CD8-positive, alpha-beta T cell (primary cell): ENCODE measurements at regions of chr20 and their contacts with region 1.

Region 1: DNA sequence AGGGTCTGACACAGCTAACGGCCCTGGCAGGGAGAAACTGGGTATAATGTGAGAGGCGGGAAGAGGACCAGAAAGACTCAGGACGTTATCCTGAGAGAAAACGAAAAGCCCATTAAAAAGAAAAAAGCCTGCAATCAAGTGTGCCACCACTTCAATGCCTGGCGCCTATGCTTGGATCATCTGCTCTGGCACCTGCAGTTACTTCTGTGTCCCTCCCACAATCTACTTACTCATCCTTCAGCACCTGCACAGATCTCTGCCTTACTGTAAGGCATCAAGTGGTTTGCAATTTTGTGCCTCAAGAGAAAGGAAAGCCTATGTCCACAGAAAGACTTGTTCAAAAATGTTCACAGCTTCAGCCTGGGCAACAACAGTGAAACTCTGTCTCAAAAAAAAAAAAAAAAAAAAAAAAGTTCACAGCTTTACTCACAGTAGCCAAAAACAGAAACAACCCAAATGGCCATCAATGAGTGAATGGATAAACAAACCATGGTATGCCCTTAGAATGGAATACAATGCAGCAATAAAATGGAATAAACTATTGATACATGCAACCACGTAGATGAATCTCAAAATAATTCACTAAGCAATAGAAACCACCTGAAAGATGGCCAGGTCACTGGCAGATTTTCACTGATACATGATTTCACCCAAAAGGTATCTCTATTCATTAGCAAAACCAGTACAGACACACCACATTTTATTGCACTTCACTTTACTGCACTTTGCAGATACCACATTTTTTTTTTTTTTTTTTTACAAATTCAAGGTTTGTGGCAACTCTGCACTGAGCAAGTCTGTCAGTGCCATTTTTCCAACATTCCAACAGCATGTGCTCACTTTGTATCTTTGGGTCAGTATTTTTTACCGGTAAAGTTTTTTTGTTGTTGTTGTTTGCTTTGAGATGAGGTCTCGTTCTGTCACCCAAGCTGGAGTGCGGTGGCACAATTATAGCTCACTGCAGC is 48.6 kb downstream of the ABHD12 start:
- DNase-seq: no peak
- ATAC-seq: no peak
- H3K4me3 ChIP-seq: no peak overlapping the region
- H3K4me3 Mint-ChIP-seq: no peak overlapping the region
- H3K27ac ChIP-seq: no peak overlapping the region
- H3K27ac Mint-ChIP-seq: no peak overlapping the region
- H3K4me1 ChIP-seq: peaks cover 5% of the 10 kb centered on the region
- H3K4me1 Mint-ChIP-seq: peaks cover 36% of the 10 kb centered on the region
- H3K27me3 ChIP-seq: no peaks in the 10 kb centered on the region
- H3K27me3 Mint-ChIP-seq: no peaks in the 10 kb centered on the region
- CTCF ChIP-seq: no peak

Region 2: DNA sequence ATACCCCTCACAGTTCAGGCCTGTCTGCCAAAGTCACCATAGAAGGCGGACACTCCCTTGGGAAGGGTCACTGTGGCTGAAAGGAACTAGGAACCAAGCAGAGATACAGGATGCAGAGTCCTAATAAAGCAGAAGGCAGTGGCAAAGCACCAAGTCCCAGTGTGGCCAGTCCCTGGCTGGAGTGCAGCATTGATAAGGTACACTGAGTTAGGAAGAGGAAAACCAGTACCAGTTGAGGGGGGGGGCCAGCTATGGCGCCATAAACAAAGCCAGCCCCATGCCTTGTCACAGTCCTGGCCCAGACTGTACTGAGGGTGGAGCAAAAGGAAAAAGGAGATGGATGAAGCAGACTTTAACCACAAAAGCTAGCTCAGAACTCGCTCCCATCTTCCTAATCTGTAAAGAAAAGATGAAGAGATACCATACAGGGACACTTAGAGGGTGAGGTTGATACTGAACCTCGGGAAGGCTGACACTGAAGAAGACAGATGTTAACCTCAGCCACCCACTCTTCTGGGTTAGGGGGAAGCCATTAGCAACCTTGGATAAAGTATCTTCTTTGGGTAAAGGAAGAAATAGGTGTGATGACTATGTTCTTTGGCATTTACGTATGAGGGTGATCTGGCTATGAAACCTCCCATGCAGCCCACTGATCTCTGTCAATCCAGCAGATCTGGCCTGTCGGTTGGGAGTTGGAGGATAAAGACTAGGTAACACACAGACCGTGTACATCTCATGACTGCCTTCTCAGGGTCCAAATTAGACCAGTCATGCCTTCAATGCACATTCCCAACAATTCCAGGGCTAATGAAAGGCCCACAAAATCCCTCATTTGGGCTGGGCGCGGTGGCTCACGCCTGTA is 40.9 kb after region 1 on chr20:
- CTCF ChIA-PET with region 1: no interaction called
- POLR2A ChIA-PET with region 1: no interaction called
- intact Hi-C with region 1: loop called in 1 of 2 experiments (anchors 5 kb)
- DNase-seq: no peak
- ATAC-seq: no peak
- H3K4me3 ChIP-seq: no peak overlapping the region
- H3K4me3 Mint-ChIP-seq: no peak overlapping the region
- H3K27ac ChIP-seq: no peak overlapping the region
- H3K27ac Mint-ChIP-seq: no peak overlapping the region
- H3K4me1 ChIP-seq: no peaks in the 10 kb centered on the region
- H3K4me1 Mint-ChIP-seq: peaks cover 12% of the 10 kb centered on the region
- H3K27me3 ChIP-seq: no peaks in the 10 kb centered on the region
- H3K27me3 Mint-ChIP-seq: no peaks in the 10 kb centered on the region
- CTCF ChIP-seq: no peak

Region 3: GRCh38 chr20:25669826-25670422 is 327.9 kb after region 1 on chr20:
- CTCF ChIA-PET with region 1: no interaction called
- POLR2A ChIA-PET with region 1: no interaction called
- intact Hi-C with region 1: no loop called
- DNase-seq: no peak
- ATAC-seq: no peak
- H3K4me3 ChIP-seq: no peak overlapping the region
- H3K4me3 Mint-ChIP-seq: no peak overlapping the region
- H3K27ac ChIP-seq: no peak overlapping the region
- H3K27ac Mint-ChIP-seq: no peak overlapping the region
- H3K4me1 ChIP-seq: no peaks in the 10 kb centered on the region
- H3K4me1 Mint-ChIP-seq: peaks cover 2% of the 10 kb centered on the region
- H3K27me3 ChIP-seq: no peaks in the 10 kb centered on the region
- H3K27me3 Mint-ChIP-seq: no peaks in the 10 kb centered on the region
- CTCF ChIP-seq: no peak